WTC11 (cell line): ENCODE measurements at regions of chr19 and their contacts with region 1.

Region 1: GRCh38 chr19:49954079-49954829 is 6.7 kb downstream of the SIGLEC11 start:
- DNase-seq: no peak
- ATAC-seq: no peak; the same call in 1 of the 2 replicates
- H3K4me3 Mint-ChIP-seq: no peak overlapping the region
- H3K27ac Mint-ChIP-seq: no peak overlapping the region
- H3K4me1 Mint-ChIP-seq: peaks cover 50% of the 10 kb centered on the region
- H3K27me3 Mint-ChIP-seq: no peaks in the 10 kb centered on the region
- CTCF ChIP-seq: no peak

Region 2: GRCh38 chr19:49937750-49938381 is 16.4 kb before region 1 on chr19:
- CTCF ChIA-PET with region 1: interaction called, 22 read pairs
- POLR2A ChIA-PET with region 1: no interaction called
- DNase-seq: peak; percentile 90
- ATAC-seq: peak; percentile 86
- H3K4me3 Mint-ChIP-seq: peak overlapping the region; percentile 51
- H3K27ac Mint-ChIP-seq: no peak overlapping the region
- H3K4me1 Mint-ChIP-seq: no peaks in the 10 kb centered on the region
- H3K27me3 Mint-ChIP-seq: no peaks in the 10 kb centered on the region; the same call in 1 of the 2 replicates
- CTCF ChIP-seq: peak; percentile 92